ENCODE measurements at regions of chr19 and their contacts with region 1.

Region 1: DNA sequence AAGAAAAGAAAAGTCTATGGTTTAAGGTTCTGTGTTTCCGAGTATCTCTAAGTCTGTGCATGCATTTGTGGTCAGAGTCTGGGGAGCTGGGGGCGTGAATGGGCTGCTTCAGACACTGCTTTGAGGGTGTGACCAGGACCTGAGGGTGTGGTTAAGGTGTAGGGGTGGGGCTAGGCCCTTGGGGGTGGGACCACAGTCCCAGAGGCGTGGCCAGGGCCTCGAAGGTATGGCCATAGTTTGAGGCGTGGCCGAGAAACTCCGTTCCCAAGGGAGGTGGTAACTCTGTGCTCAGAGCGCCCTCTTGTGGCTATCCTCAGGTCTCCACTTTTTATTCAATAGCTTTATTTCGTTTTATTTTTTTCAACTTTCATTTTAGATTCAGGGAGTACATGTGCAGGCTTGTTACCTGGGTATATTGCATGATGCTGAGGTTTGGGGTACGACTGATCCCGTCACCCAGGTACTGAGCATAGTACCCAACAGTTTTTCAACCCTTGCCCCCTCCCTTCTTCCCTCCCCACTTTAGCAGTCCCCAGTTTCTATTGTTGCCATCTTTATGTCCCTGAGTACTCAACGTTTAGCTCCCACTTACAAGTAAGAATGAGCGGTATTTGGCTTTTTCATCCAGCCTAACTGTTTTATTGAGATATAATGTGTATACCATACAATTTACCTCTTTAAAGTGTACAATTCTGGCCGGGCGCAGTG is 7.0 kb upstream of the CBLC start:
- DNase-seq: peak; percentile 97
- H3K4me3 ChIP-seq: no peak overlapping the region
- H3K27ac ChIP-seq: peak overlapping the region; percentile 73
- H3K4me1 ChIP-seq: peaks cover 31% of the 10 kb centered on the region
- H3K27me3 ChIP-seq: no peaks in the 10 kb centered on the region
- CTCF ChIP-seq: peak; percentile 57 to 75

Region 2: GRCh38 chr19:44512326-44513298 is 258.1 kb before region 1 on chr19:
- CTCF ChIA-PET with region 1: no interaction called
- dilution Hi-C with region 1: no loop called
- in situ Hi-C with region 1: no loop called
- intact Hi-C with region 1: loop called (anchors 2 kb)
- DNase-seq: peak; percentile 61
- H3K4me3 ChIP-seq: no peak overlapping the region
- H3K27ac ChIP-seq: no peak overlapping the region
- H3K4me1 ChIP-seq: no peaks in the 10 kb centered on the region
- H3K27me3 ChIP-seq: peaks cover 5% of the 10 kb centered on the region
- CTCF ChIP-seq: peak; percentile 69 to 89

Region 3: GRCh38 chr19:44587963-44588770 is 182.5 kb before region 1 on chr19:
- CTCF ChIA-PET with region 1: interaction called, 6 read pairs
- dilution Hi-C with region 1: no loop called
- in situ Hi-C with region 1: loop called in 1 of 2 experiments (anchors 25 kb)
- intact Hi-C with region 1: loop called (anchors 1 kb)
- DNase-seq: peak; percentile 74
- H3K4me3 ChIP-seq: no peak overlapping the region
- H3K27ac ChIP-seq: peak overlapping the region; percentile 76
- H3K4me1 ChIP-seq: peaks cover 20% of the 10 kb centered on the region
- H3K27me3 ChIP-seq: no peaks in the 10 kb centered on the region
- CTCF ChIP-seq: peak; percentile 13 to 52

Region 4: DNA sequence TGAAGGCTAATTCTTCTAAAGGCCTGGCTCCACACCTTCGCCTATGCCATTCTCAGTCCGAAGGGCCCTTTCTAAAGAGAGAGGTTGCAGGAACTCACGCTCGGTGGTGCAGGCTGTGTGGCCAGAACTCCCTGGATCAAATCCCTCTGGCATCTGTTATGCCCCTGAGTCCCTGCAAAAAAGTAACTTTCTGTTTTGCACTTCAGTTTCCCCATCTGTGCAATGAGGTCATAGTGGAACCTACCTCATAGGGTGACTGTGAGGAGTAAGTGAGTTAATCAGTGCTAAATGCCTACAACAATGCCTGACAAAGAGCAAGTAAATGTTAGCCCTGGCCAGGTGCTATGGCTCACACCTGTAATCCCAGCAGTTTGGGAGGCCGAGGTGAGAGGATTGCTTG is 150.0 kb before region 1 on chr19:
- CTCF ChIA-PET with region 1: no interaction called
- dilution Hi-C with region 1: no loop called
- in situ Hi-C with region 1: no loop called
- intact Hi-C with region 1: no loop called
- DNase-seq: no peak
- H3K4me3 ChIP-seq: no peak overlapping the region
- H3K27ac ChIP-seq: no peak overlapping the region
- H3K4me1 ChIP-seq: peaks cover 9% of the 10 kb centered on the region
- H3K27me3 ChIP-seq: no peaks in the 10 kb centered on the region
- CTCF ChIP-seq: no peak

Region 5: DNA sequence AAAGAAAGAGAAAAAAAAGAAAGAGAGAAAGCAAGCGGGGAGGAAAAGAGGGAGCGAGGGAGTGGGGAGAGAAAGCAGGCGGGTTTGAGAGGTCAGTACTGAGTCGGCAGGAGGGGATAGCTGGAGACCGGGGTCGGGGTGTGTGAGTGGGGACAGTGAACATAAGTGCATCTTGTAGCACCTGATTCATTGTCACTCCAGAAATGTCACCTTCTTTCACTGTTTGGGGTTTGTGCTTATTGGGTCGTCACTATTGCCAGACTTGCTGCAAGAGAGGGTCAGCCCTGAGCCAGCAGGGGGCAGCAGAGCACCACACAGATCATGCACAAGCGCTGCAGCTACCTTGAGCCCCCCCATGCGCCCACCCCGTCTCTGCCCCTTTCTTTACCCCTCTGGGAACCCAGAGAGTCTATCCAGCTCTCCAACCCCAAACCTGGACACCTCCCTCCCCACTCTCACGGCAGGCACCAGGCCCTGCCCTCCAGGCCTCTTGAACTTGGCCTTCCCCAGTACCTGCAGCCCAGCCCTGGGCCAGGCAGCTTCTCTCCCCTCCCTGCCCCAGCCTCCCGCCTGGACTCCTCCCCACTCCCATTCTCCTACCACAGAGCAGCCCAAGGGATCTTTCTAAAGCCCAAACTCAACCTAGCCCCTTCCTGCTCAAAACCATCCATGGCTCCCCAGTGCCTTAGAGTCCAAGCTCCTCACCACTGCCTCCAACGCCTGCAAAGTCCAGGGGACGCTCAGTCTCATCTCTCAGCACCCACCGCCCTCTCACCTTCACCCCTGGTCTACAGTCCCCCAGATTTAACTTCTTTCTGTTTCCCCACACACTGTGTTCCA is 81.4 kb before region 1 on chr19:
- CTCF ChIA-PET with region 1: no interaction called
- dilution Hi-C with region 1: no loop called
- in situ Hi-C with region 1: no loop called
- intact Hi-C with region 1: loop called (anchors 1 kb)
- DNase-seq: no peak
- H3K4me3 ChIP-seq: no peak overlapping the region
- H3K27ac ChIP-seq: no peak overlapping the region
- H3K4me1 ChIP-seq: peaks cover 23% of the 10 kb centered on the region
- H3K27me3 ChIP-seq: no peaks in the 10 kb centered on the region
- CTCF ChIP-seq: peak; percentile 87 to 94

Region 6: DNA sequence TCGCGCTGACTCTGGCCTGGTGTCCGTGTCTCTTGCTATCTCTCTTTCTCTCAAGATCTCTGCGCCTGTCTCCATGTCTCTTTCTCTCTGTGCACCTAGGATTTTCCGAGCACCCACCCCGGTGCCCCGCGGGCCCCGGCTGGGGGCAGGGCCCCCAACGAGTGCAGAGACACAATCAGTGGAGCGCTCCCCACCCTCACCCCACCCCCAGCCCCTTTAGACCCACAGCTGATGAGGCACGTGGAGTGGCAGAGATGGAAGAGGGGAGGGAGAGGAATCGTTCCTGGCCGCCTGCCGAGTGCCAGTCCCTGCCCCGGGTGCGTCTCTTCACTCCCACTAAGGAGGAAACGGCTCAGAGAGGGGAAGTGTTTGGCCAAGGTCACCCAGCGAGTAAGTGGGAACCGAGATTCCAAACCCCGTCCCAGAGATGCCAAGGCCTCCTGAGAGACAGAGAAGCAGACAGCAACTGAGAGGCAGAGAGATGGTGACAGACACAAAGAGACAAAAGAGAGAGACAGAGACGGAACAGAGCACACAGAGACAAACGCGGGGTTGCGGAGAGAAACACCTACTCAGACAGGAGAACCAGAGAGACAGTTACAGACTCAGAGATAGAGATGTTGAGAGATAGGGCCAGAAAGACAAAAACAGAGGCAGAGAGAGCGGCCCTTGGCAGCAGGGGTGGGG is 22.8 kb before region 1 on chr19:
- CTCF ChIA-PET with region 1: interaction called, 6 read pairs
- dilution Hi-C with region 1: no loop called
- in situ Hi-C with region 1: no loop called
- intact Hi-C with region 1: loop called (anchors 2 kb)
- DNase-seq: peak; percentile 65
- H3K4me3 ChIP-seq: peak overlapping the region; percentile 26 to 75 (median 43)
- H3K27ac ChIP-seq: peak overlapping the region; percentile 76
- H3K4me1 ChIP-seq: peaks cover 42% of the 10 kb centered on the region
- H3K27me3 ChIP-seq: no peaks in the 10 kb centered on the region
- CTCF ChIP-seq: no peak

Region 7: GRCh38 chr19:44890366-44891015 is 119.8 kb after region 1 on chr19:
- CTCF ChIA-PET with region 1: no interaction called
- dilution Hi-C with region 1: no loop called
- in situ Hi-C with region 1: no loop called
- intact Hi-C with region 1: loop called (anchors 5 kb)
- DNase-seq: peak; percentile 100
- H3K4me3 ChIP-seq: peak overlapping the region; percentile 36 to 51 (median 43)
- H3K27ac ChIP-seq: peak overlapping the region; percentile 84
- H3K4me1 ChIP-seq: peaks cover 16% of the 10 kb centered on the region
- H3K27me3 ChIP-seq: no peaks in the 10 kb centered on the region
- CTCF ChIP-seq: no peak